OCI-LY7 (cell line): ENCODE measurements at regions of chrX and their contacts with region 1.

Region 1: DNA sequence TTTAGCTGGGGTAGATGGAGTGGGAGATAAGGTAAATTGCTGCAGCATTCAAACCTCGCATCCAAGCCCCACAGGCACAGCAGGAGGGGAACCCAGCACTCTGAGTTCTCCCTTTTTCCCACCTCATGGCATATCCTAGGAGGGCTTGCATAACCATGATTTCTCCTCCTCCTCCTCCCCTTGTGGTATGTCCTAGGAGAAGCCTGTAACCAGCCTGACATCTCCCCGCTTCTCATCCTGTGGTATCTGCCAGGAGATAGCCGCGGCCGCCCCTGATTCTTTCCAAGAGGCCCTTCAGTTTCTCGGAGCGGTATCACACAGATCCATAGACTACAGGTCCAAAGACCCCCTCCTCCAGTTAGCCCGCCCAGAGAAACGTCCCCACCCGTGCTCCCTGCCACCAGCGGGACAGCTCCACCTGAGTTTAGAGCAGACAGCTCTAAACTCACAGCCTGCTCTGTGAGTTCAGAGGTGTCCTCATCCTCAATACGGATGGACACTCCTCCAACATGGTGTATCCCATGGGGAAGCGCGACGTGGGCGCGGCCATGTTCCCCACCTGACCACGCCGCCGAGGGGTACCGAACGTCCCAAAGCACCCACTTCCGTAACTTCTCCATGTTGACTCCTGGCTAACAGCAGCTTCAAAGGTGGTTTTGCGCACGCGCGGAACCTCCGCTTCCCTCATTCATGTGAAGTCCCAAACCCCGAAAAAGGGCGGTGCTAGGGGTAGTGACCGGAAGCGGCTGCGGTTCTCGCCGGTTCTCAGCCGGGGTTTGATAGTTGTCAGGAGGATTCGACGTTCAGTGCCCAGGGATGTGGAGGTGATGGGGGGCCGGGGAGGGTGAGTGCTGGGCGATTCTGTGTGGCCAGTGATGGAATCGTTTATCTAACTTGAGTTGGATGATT is at the start of gene ZNF81:
- DNase-seq: peak; percentile 95
- H3K4me3 ChIP-seq: peak within 1 kb of the TSS; percentile 90
- H3K27ac ChIP-seq: peak within 1 kb of the TSS; percentile 38
- H3K4me1 ChIP-seq: peaks cover 17% of the 10 kb centered on the region
- CTCF ChIP-seq: no peak
- total RNA-seq, gene ZNF81: 4.9 and 7.1 TPM in 2 replicates

Region 2: DNA sequence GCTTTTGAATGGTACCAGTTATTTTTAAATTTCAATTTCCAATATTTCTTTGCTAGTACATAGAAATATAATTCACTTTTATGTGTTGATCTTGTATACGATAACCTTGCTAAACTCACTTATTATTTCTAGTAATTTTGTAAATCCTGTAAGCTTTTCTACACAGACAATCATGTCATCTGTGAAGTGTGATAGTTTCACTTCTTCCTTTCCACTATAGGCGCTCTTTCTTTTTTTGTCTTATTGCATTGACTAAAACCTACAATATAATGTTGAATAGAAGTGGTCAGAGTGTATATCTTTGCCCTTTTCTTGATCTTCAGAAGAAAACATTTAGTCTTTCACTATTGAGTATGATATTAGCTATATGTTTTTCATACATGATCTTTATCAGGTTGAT is 90.8 kb after region 1 on chrX:
- CTCF ChIA-PET with region 1: no interaction called
- POLR2A ChIA-PET with region 1: no interaction called
- intact Hi-C with region 1: loop called (anchors 5 kb)
- DNase-seq: peak; percentile 36
- H3K4me3 ChIP-seq: peak overlapping the region; percentile 34
- H3K27ac ChIP-seq: peak overlapping the region; percentile 57
- H3K4me1 ChIP-seq: peaks cover 26% of the 10 kb centered on the region
- CTCF ChIP-seq: no peak